ENCODE measurements at regions of chr2 and their contacts with region 1.

Region 1: DNA sequence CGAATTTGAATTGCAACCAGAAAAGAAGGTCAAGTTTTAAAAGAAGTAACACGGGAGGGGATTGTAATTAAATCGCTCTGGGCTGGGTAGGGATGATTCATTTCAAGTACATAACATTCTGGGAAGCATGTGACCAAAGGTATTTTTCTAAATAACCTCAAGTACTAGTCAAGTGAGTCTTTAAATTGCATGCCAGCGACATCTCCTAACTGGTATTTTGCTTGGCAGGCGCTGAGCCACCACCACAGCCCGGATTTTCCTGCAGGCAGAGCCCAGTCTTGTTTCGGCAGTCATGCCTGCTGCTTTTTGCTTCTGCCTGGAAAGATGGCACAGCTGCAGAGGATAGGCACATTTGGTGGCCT is 33.7 kb upstream of the NPAS2 start:
- DNase-seq: peak; percentile 96
- ATAC-seq: peak; percentile 83
- H3K4me3 ChIP-seq: peak overlapping the region; percentile 49
- H3K27ac ChIP-seq: peak overlapping the region; percentile 91
- H3K4me1 ChIP-seq: peaks cover 51% of the 10 kb centered on the region
- H3K27me3 ChIP-seq: no peaks in the 10 kb centered on the region
- CTCF ChIP-seq: no peak

Region 2: GRCh38 chr2:100742277-100743254 is 43.7 kb before region 1 on chr2:
- CTCF ChIA-PET with region 1: no interaction called
- POLR2A ChIA-PET with region 1: no interaction called
- intact Hi-C with region 1: no loop called
- DNase-seq: peak; percentile 79
- ATAC-seq: peak; percentile 89
- H3K4me3 ChIP-seq: peak overlapping the region; percentile 13; the same call in 1 of the 2 replicates
- H3K27ac ChIP-seq: peak overlapping the region; percentile 65
- H3K4me1 ChIP-seq: peaks cover 28% of the 10 kb centered on the region
- H3K27me3 ChIP-seq: no peaks in the 10 kb centered on the region
- CTCF ChIP-seq: no peak

Region 3: GRCh38 chr2:100767224-100767653 is 19.0 kb before region 1 on chr2:
- CTCF ChIA-PET with region 1: interaction called, 5 read pairs
- POLR2A ChIA-PET with region 1: no interaction called
- intact Hi-C with region 1: loop called (anchors 1 kb)
- DNase-seq: peak; percentile 97
- ATAC-seq: peak; percentile 79
- H3K4me3 ChIP-seq: peak overlapping the region; percentile 47
- H3K27ac ChIP-seq: peak overlapping the region; percentile 96
- H3K4me1 ChIP-seq: peaks cover 52% of the 10 kb centered on the region
- H3K27me3 ChIP-seq: no peaks in the 10 kb centered on the region
- CTCF ChIP-seq: no peak

Region 4: DNA sequence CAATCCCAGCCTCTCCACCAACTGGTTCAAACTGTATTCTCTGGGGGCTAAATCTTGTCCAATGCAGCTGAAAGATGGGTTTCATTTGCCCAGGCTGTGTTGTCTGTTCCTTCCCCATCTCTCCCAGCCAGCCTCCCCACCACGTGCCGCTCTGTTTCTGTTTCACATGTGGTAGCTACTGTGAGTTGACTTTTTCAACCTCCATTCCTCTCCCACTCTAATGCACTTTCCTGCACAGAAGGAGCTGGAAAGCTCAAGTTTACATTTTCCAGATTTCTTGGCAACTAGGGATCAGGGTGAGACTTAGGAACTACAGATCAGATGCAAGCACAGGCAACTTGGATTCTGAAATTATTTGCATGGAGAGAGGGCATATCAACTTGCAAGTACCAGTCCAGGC is 14.6 kb after region 1 on chr2:
- CTCF ChIA-PET with region 1: no interaction called
- POLR2A ChIA-PET with region 1: no interaction called
- intact Hi-C with region 1: loop called (anchors 1 kb)
- DNase-seq: no peak
- ATAC-seq: no peak
- H3K4me3 ChIP-seq: no peak overlapping the region
- H3K27ac ChIP-seq: no peak overlapping the region
- H3K4me1 ChIP-seq: peaks cover 11% of the 10 kb centered on the region
- H3K27me3 ChIP-seq: no peaks in the 10 kb centered on the region
- CTCF ChIP-seq: no peak

Region 5: GRCh38 chr2:101038455-101039255 is 252.4 kb after region 1 on chr2:
- CTCF ChIA-PET with region 1: no interaction called
- POLR2A ChIA-PET with region 1: no interaction called
- intact Hi-C with region 1: no loop called
- DNase-seq: peak; percentile 44
- ATAC-seq: peak; percentile 50; the same call in 1 of the 2 replicates
- H3K4me3 ChIP-seq: no peak overlapping the region
- H3K27ac ChIP-seq: no peak overlapping the region
- H3K4me1 ChIP-seq: no peaks in the 10 kb centered on the region
- H3K27me3 ChIP-seq: no peaks in the 10 kb centered on the region
- CTCF ChIP-seq: peak; percentile 84

Region 6: DNA sequence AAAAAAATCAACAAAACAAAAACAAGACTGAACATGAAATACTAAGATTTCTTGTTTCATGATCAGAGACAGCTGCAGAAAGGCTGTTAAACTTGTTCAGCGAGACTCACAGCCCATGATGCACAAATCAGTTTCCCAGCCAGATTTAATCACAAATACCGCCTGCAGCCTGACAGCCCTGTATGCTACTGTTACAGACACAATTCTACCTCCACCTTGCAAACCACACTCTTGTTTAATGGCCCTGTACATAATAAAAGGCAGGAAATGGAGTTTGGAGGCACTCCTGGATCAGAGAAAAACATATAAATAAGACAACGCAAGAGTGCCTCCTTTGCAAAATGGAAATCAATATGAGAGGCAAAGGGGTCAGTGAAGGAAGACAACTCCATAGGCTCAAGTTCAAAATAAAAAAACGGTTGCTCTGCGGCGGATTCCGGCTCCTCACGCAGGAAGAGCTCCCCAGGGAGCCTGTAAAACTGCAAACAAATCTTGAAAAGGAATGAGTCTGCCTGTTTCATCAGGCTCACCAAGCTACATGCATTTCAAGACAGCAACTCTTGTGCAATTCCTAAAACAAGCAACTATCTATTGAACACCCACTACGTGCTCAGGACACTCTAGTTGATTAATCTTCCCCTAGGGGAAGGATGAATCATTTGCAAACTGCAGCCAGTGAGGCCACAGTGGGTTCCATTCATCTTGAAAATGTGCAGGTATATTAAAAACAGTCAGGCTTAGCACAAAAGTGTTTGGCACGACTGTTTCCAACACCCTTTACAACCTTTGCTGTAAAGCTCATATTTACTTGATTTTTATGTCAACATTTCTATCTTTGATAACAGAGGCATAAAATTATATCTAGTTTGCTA is 327.4 kb after region 1 on chr2:
- CTCF ChIA-PET with region 1: no interaction called
- POLR2A ChIA-PET with region 1: no interaction called
- intact Hi-C with region 1: no loop called
- DNase-seq: peak; percentile 90
- ATAC-seq: peak; percentile 73
- H3K4me3 ChIP-seq: peak overlapping the region; percentile 40; the same call in 1 of the 2 replicates
- H3K27ac ChIP-seq: peak overlapping the region; percentile 94
- H3K4me1 ChIP-seq: peaks cover 61% of the 10 kb centered on the region
- H3K27me3 ChIP-seq: no peaks in the 10 kb centered on the region
- CTCF ChIP-seq: no peak

Measured in PC-3 (cell line).